ENCODE measurements at regions of chr11 and their contacts with region 1.

Region 1: GRCh38 chr11:119205574-119206510 is at the start of gene CBL:
- DNase-seq: peak; percentile 91 to 95 (median 92)
- H3K4me3 ChIP-seq: peak within 1 kb of the TSS; percentile 64 to 94
- H3K4me3 Mint-ChIP-seq: peak within 1 kb of the TSS; percentile 91 to 100 (median 96)
- H3K27ac ChIP-seq: peak within 1 kb of the TSS; percentile 77
- H3K27ac Mint-ChIP-seq: peak within 1 kb of the TSS; percentile 80 to 96 (median 94)
- H3K4me1 ChIP-seq: peaks cover 35% of the 10 kb centered on the region
- H3K4me1 Mint-ChIP-seq: peaks cover 15 to 54% (median 28%) of the 10 kb centered on the region in 4 donors
- H3K27me3 ChIP-seq: no peaks in the 10 kb centered on the region
- H3K27me3 Mint-ChIP-seq: no peaks in the 10 kb centered on the region
- total RNA-seq, gene CBL: 39.5 to 39.8 TPM

Region 2: DNA sequence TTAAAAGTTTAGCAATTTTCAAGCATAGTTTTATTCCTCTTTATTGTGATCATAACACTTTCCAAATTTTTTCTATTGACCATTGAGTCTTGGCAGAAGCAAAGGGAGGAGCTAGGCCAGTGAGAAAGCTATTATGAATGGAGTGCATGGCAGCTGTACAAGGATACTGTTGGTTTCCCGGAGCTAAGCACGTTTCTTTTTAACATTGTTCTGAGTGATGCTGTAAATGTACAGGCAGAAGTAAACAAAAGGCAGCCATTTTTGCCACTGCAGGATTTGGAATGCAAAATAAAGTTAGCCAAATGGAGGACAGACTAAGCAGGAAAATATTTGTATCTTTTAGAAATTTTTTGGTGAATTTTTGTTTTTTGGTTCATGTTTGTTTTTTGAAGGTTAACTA is 16.5 kb after region 1 on chr11:
- CTCF ChIA-PET with region 1: interaction called, 9 read pairs
- POLR2A ChIA-PET with region 1: interaction called, 10 read pairs
- intact Hi-C with region 1: no loop called
- DNase-seq: no peak
- H3K4me3 ChIP-seq: no peak overlapping the region
- H3K4me3 Mint-ChIP-seq: peak overlapping the region in 4 of 8 donors; percentile 0 to 63 (median 32)
- H3K27ac ChIP-seq: no peak overlapping the region
- H3K27ac Mint-ChIP-seq: peak overlapping the region in 4 of 7 donors; percentile 15 to 78 (median 40)
- H3K4me1 ChIP-seq: peaks cover 31% of the 10 kb centered on the region
- H3K4me1 Mint-ChIP-seq: peaks cover 42 to 68% (median 56%) of the 10 kb centered on the region in 4 donors
- H3K27me3 ChIP-seq: no peaks in the 10 kb centered on the region
- H3K27me3 Mint-ChIP-seq: no peaks in the 10 kb centered on the region

Region 3: GRCh38 chr11:119229288-119229672 is 23.4 kb after region 1 on chr11:
- CTCF ChIA-PET with region 1: interaction called, 14 read pairs
- POLR2A ChIA-PET with region 1: interaction called, 24 read pairs
- intact Hi-C with region 1: loop called (anchors 2 kb)
- DNase-seq: no peak
- H3K4me3 ChIP-seq: no peak overlapping the region
- H3K4me3 Mint-ChIP-seq: peak overlapping the region; percentile 3 to 86 (median 68)
- H3K27ac ChIP-seq: no peak overlapping the region
- H3K27ac Mint-ChIP-seq: peak overlapping the region; percentile 4 to 88 (median 70)
- H3K4me1 ChIP-seq: peaks cover 21% of the 10 kb centered on the region
- H3K4me1 Mint-ChIP-seq: peaks cover 35 to 71% (median 50%) of the 10 kb centered on the region in 4 donors
- H3K27me3 ChIP-seq: no peaks in the 10 kb centered on the region
- H3K27me3 Mint-ChIP-seq: no peaks in the 10 kb centered on the region

Region 4: DNA sequence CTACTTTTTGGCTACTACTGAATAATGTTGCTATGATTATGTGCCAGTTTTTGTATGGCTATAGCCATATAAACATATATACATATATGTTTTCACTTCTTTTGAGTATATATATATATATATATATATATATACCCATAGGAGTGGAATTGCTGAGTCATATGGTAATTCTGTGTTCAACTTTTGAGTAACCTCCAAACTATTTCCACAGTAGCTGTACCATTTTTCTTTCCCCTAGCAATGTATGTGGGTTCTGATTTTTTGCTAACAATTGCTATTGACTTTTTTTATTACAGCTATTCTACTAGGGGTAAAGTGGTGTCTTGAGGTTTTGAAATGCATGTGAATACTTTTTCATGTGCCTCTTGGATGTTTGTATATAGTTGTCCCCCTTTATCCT is 30.6 kb after region 1 on chr11:
- CTCF ChIA-PET with region 1: interaction called, 14 read pairs
- POLR2A ChIA-PET with region 1: interaction called, 24 read pairs
- intact Hi-C with region 1: loop called (anchors 5 kb)
- DNase-seq: no peak
- H3K4me3 ChIP-seq: no peak overlapping the region
- H3K4me3 Mint-ChIP-seq: no peak overlapping the region
- H3K27ac ChIP-seq: no peak overlapping the region
- H3K27ac Mint-ChIP-seq: peak overlapping the region in 2 of 7 donors; percentile 22 to 23
- H3K4me1 ChIP-seq: peaks cover 33% of the 10 kb centered on the region
- H3K4me1 Mint-ChIP-seq: peaks cover 30 to 54% (median 39%) of the 10 kb centered on the region in 4 donors
- H3K27me3 ChIP-seq: no peaks in the 10 kb centered on the region
- H3K27me3 Mint-ChIP-seq: no peaks in the 10 kb centered on the region

Region 5: GRCh38 chr11:119262668-119263351 is 57.0 kb after region 1 on chr11:
- CTCF ChIA-PET with region 1: interaction called, 68 read pairs
- POLR2A ChIA-PET with region 1: interaction called, 30 read pairs
- intact Hi-C with region 1: loop called (anchors 1 kb)
- DNase-seq: peak in 2 of 5 donors; percentile 9 to 21
- H3K4me3 ChIP-seq: peak overlapping the region in 1 of 2 donors; percentile 5
- H3K4me3 Mint-ChIP-seq: no peak overlapping the region
- H3K27ac ChIP-seq: peak overlapping the region; percentile 39
- H3K27ac Mint-ChIP-seq: no peak overlapping the region
- H3K4me1 ChIP-seq: peaks cover 94% of the 10 kb centered on the region
- H3K4me1 Mint-ChIP-seq: peaks cover 44 to 60% (median 49%) of the 10 kb centered on the region in 4 donors
- H3K27me3 ChIP-seq: no peaks in the 10 kb centered on the region
- H3K27me3 Mint-ChIP-seq: no peaks in the 10 kb centered on the region

Measured in CD4-positive, alpha-beta memory T cell (primary cell).